ENCODE measurements at regions of chr12 and their contacts with region 1.

Region 1: DNA sequence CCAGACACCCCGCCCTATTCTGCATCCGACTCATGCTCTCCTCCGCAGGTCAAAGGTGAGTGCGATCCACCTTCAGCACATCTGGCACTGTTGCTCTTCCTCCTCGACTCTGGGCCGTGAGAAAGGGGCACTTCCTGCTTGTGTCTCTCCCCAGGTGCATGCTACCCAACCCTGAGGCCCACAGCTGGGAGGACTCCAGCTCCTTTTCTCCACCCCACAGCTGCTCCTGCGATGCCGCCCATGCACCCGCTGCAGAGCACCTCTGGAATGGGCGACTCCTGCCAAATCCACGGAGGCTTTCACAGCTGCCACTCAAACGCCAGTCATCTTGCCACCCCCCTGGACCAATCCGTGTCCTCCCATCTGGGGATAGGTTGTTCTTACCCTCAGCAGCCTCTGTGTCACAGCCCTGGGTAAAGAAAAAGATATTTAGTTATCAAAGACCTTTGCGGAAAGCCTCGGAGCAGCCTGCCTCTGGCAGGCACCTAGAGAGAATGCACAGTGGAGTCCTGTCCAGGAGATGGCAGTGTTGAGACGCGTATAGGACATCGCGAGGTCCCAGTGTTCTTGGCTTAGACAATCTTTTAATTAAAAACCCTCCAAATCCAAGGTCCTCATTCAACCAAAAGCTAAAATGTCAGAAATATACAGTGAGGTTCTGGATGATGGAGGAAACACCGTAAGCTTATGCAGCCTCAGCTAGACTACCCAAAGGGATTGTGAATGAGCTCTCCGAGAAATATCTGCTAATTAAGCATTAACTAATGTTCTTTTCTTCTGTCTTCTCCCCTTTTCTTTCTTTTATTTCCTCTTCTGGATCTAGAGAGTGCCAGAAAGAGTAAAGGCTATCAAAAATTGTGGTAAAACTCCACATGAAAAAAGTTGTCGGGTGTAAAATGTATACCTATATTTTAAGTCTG is 54.3 kb downstream of the MYRFL start:
- DNase-seq: peak; percentile 82
- ATAC-seq: peak; percentile 94
- H3K4me3 Mint-ChIP-seq: no peak overlapping the region
- H3K27ac Mint-ChIP-seq: no peak overlapping the region
- H3K4me1 Mint-ChIP-seq: no peaks in the 10 kb centered on the region
- H3K27me3 Mint-ChIP-seq: peaks cover 19% of the 10 kb centered on the region
- CTCF ChIP-seq: peak; percentile 89

Region 2: DNA sequence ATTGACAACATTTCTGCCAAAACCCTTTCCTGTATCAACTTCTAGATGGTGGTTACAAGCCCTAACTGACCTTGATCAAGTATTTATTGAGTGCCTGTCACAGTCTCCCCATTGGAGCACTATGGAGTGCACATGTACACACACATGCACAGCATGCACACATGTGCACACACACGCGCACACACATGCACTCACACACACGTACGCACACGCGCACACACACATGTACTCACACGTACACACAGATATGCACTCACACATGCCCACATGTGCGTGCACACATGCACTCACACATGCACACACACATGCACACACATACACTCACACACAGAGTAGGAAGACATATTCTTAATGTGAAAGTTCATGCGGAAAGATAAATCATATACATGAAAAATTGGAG is 10.6 kb before region 1 on chr12:
- CTCF ChIA-PET with region 1: interaction called, 11 read pairs
- POLR2A ChIA-PET with region 1: no interaction called
- intact Hi-C with region 1: no loop called
- DNase-seq: no peak
- ATAC-seq: no peak
- H3K4me3 Mint-ChIP-seq: no peak overlapping the region
- H3K27ac Mint-ChIP-seq: no peak overlapping the region
- H3K4me1 Mint-ChIP-seq: no peaks in the 10 kb centered on the region
- H3K27me3 Mint-ChIP-seq: peaks cover 11% of the 10 kb centered on the region
- CTCF ChIP-seq: no peak

Region 3: DNA sequence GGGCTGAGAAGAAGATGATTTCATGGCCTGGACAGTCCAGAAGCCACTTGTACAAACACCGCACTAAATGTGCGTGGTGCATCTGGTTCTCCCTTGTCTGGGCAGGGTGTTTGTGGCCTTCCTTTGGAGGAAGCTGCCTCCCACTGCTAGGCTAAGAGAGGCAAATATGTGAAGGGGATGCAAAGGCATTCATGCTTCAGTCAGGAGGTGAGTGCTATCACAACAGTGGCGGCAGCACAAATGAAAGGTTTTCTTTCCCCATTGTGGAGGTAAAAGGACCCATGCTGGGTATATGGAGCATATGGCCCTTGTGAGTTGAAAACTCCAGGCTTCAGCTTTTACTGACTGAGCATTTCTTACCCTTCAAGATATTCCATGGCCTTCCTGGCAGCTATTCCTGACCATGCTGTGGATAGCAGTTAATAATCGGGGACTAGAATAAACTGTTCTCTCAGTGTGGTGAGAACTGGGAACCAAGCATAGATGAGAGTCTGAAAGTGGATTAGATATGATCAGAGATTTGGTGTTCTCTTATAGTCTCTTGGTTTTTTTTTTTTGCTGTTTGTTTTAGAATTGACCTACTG is 15.6 kb after region 1 on chr12:
- CTCF ChIA-PET with region 1: interaction called, 33 read pairs
- POLR2A ChIA-PET with region 1: no interaction called
- intact Hi-C with region 1: no loop called
- DNase-seq: no peak
- ATAC-seq: no peak
- H3K4me3 Mint-ChIP-seq: no peak overlapping the region
- H3K27ac Mint-ChIP-seq: no peak overlapping the region
- H3K4me1 Mint-ChIP-seq: no peaks in the 10 kb centered on the region
- H3K27me3 Mint-ChIP-seq: no peaks in the 10 kb centered on the region
- CTCF ChIP-seq: no peak

Region 4: GRCh38 chr12:69900720-69901131 is 21.4 kb after region 1 on chr12:
- CTCF ChIA-PET with region 1: interaction called, 33 read pairs
- POLR2A ChIA-PET with region 1: no interaction called
- intact Hi-C with region 1: no loop called
- DNase-seq: peak; percentile 85
- ATAC-seq: no peak
- H3K4me3 Mint-ChIP-seq: no peak overlapping the region
- H3K27ac Mint-ChIP-seq: no peak overlapping the region
- H3K4me1 Mint-ChIP-seq: no peaks in the 10 kb centered on the region
- H3K27me3 Mint-ChIP-seq: peaks cover 1% of the 10 kb centered on the region
- CTCF ChIP-seq: peak; percentile 94

Region 5: DNA sequence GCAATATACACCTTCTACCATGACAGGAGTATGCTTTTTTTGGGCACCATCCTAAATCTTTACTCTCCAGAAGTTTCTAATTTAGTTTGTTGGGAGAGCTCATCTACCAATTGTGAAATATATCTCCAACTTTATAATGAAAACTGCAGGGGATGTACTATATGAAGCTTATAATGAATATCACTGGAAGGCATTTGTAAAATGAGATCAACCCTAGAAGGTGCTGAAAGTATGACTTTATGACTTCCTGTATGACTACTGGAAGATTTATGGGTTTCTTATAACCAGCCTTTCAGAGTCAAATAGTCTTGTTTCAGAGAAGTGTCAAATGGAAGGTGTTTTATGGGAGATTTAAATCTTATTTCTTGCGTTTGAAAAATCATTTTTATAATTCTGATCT is 68.6 kb after region 1 on chr12:
- CTCF ChIA-PET with region 1: no interaction called
- POLR2A ChIA-PET with region 1: no interaction called
- intact Hi-C with region 1: no loop called
- DNase-seq: no peak
- ATAC-seq: no peak
- H3K4me3 Mint-ChIP-seq: no peak overlapping the region
- H3K27ac Mint-ChIP-seq: no peak overlapping the region
- H3K4me1 Mint-ChIP-seq: no peaks in the 10 kb centered on the region
- H3K27me3 Mint-ChIP-seq: no peaks in the 10 kb centered on the region
- CTCF ChIP-seq: no peak

Region 6: DNA sequence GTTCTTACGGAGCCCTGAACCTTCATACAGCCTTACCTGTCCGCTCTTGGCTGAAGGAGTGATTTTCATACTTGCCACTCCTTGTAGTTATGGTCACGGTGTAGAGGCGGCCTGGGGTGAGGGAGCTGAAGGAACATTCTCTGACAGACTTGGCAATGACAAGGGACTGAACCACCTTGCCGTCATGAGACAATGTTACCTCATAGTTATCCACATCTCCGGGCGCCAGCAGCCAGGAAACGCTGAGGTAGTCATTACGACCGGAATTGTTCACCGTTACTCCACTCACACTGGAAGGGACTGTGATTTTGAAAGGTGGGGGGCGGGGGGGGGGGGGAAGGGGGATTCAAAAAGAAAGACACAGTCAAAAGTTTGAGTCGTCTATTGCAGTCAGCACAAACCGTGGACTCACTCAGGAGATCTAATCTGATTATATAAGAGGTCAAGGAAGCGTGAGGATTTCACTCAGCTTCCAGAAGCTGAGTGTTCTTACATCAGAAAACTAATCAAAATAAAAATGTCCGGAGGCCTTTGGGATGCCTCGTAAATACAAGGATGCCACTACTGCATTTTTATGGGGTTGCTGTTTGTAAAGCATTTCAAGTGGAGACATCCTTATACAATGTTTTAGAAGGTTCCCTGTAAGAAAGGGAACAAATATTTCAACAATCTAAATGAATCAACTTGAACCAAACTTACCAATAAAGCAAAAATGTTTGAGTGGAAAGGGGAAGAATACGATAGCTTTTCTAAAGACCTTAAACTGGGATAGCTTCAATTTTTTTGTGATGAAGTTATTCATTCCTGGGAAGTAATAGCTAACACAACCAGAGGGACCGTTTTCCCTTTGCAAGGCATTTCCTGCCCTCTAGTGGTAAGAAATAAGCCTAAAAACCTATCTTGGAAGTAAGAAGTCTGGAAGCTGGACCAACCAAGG is 697.3 kb after region 1 on chr12:
- CTCF ChIA-PET with region 1: interaction called, 27 read pairs
- POLR2A ChIA-PET with region 1: no interaction called
- intact Hi-C with region 1: loop called (anchors 2 kb)
- DNase-seq: no peak
- ATAC-seq: no peak
- H3K4me3 Mint-ChIP-seq: no peak overlapping the region
- H3K27ac Mint-ChIP-seq: no peak overlapping the region
- H3K4me1 Mint-ChIP-seq: no peaks in the 10 kb centered on the region
- H3K27me3 Mint-ChIP-seq: peaks cover 9% of the 10 kb centered on the region
- CTCF ChIP-seq: peak; percentile 69

Region 7: DNA sequence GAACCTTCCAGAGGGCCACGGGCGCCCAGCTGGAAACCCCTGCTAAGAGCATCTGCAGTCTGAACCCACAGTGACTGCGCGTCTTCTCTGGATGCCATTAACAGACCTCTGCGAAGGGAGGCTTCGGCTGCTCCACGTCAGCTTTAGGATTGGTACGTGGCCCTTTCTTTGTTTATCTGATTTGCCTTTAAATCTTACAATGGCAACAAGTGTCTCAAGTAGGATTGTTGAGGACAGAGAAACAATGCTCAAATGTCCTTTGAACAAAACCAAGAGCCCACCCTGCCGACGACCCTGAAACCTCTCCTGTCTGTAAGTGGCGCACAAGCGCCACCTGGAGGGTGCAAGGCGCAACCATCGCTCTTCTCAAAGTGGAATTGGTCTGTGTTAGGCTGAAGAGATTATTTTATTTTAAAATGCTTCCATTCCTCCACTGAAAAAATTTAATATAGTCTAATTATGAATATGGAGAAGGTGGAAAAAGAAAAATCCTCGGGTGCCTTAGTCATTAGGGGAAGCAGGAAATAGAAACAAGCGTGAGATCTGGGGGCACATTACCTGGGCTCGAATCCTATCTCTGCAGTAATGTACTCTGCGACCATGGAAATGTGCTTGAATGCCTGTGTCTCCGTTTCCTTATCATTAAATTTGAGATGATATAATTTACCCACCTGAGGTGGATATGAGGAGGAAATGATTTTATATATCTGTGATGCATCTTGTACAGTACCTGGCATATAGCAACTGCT is 840.5 kb after region 1 on chr12:
- CTCF ChIA-PET with region 1: interaction called, 12 read pairs
- POLR2A ChIA-PET with region 1: no interaction called
- intact Hi-C with region 1: no loop called
- DNase-seq: peak; percentile 45
- ATAC-seq: peak; percentile 68
- H3K4me3 Mint-ChIP-seq: peak overlapping the region; percentile 28
- H3K27ac Mint-ChIP-seq: no peak overlapping the region
- H3K4me1 Mint-ChIP-seq: peaks cover 2% of the 10 kb centered on the region
- H3K27me3 Mint-ChIP-seq: peaks cover 3% of the 10 kb centered on the region
- CTCF ChIP-seq: peak; percentile 95

Region 8: GRCh38 chr12:70733385-70733784 is 854.1 kb after region 1 on chr12:
- CTCF ChIA-PET with region 1: interaction called, 11 read pairs
- POLR2A ChIA-PET with region 1: no interaction called
- intact Hi-C with region 1: no loop called
- DNase-seq: peak; percentile 10
- ATAC-seq: peak; percentile 51
- H3K4me3 Mint-ChIP-seq: no peak overlapping the region
- H3K27ac Mint-ChIP-seq: no peak overlapping the region
- H3K4me1 Mint-ChIP-seq: no peaks in the 10 kb centered on the region
- H3K27me3 Mint-ChIP-seq: peaks cover 4% of the 10 kb centered on the region
- CTCF ChIP-seq: peak; percentile 45